Activated CD4-positive, alpha-beta T cell treated with anti-CD3 and anti-CD28 coated beads, Interleukin-2, amount 10 ng/mL, durations not matched to agents 24 days and 14 days (primary cell): ENCODE measurements at regions of chr10 and their contacts with region 1.

Region 1: DNA sequence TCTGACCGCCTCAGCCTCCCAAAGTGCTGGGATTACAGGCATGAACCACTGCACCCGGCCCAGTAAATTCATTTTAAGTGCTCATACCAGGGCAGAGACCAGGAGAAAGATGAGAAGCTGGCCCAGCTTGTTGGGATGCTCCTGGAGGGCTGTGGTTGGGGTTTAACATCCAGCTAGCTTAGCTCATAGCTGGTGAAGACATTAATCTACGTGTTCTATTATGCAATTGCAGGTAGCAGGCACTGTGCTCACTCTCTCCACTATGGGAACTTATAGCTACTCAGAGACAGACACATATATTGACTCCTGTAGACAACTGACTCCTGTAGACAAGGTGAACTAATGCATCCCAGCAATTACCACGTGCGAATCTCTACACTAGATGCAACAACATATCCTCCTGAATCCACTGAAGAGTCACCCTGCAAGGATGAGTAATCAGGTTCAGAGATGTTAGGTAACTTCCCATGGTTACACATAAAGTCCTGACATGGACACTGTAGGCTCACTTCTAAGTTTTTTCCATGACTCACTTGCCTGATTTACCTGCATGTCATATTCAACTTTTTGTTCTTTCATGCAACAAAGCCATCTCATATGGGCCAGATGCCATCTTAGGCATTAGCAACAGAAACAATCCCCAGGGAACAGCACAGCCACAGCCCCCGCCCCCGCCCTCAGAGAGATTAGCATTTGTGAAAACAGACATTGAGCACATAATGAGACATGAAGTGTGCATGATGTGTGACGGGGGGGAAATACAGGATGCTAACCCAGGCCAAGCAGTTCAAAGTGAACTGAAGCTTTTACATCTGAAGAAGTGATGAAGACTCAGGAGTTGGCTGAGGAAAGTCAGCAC is 37.2 kb downstream of the ERLIN1 start:
- DNase-seq: no peak
- H3K4me3 Mint-ChIP-seq: peak overlapping the region; percentile 29
- H3K27ac Mint-ChIP-seq: peak overlapping the region; percentile 84
- H3K4me1 Mint-ChIP-seq: peaks cover 15% of the 10 kb centered on the region
- H3K27me3 Mint-ChIP-seq: peaks cover 3% of the 10 kb centered on the region

Region 2: GRCh38 chr10:100130831-100131230 is 17.8 kb before region 1 on chr10:
- intact Hi-C with region 1: no loop called
- DNase-seq: no peak
- H3K4me3 Mint-ChIP-seq: no peak overlapping the region
- H3K27ac Mint-ChIP-seq: no peak overlapping the region
- H3K4me1 Mint-ChIP-seq: no peaks in the 10 kb centered on the region
- H3K27me3 Mint-ChIP-seq: peaks cover 30% of the 10 kb centered on the region

Region 3: DNA sequence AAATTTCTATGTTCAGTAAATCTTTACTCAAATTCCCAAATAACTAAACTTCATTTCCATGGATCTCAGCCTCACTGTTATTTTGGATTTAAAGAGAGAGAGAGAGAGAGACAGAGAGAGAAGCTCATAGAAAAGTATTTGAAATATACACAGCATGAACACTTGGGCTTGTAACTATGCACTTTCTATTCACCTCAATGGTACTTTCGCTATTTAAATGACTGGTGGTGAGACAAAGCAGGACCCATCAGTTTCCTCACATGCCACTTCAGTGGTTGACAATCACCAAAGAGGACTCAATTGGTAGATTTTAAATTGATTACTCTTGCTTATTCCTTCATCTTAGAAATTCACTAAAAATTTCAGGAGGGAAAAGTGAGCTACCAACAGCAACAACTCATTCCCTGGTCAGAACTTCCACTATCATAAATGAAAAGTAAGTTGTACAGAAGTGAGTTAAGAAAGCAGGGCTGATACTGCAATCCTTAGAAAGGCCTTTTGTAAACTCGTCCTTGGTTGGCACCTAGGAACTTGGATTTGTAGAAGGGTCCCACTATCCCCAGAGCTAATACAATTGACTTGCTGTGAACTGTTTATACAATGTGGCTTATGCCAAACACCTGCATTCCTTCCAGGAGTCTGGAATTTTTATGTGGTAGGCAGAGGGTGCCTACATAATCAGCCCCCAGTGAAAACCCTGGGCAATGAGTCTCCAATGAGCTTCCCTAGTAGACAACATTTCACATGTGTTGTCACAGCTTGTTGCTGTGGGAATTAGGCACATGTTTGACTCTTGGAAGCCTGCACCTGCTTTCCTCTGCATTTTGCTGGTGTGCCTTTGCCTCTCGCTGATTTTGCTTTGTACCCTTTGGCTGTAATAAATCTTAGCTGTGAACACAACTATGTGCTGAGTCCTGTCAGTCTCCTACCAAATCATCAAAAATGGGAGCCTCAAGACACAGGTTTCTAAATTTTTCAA is 26.4 kb after region 1 on chr10:
- intact Hi-C with region 1: loop called (anchors 2 kb)
- DNase-seq: peak; percentile 56
- H3K4me3 Mint-ChIP-seq: peak overlapping the region; percentile 32
- H3K27ac Mint-ChIP-seq: peak overlapping the region; percentile 79
- H3K4me1 Mint-ChIP-seq: peaks cover 21% of the 10 kb centered on the region
- H3K27me3 Mint-ChIP-seq: no peaks in the 10 kb centered on the region